IMR-90 (cell line): ENCODE measurements at regions of chr3 and their contacts with region 1.

Region 1: GRCh38 chr3:18559331-18559842 is 134.2 kb upstream of the SATB1 start:
- DNase-seq: no peak
- ATAC-seq: no peak
- H3K4me3 ChIP-seq: no peak overlapping the region
- H3K27ac ChIP-seq: no peak overlapping the region
- H3K4me1 ChIP-seq: no peaks in the 10 kb centered on the region
- H3K27me3 ChIP-seq: no peaks in the 10 kb centered on the region
- CTCF ChIP-seq: no peak
- POLR2A ChIP-seq: no peak
- RAD21 ChIP-seq: no peak

Region 2: DNA sequence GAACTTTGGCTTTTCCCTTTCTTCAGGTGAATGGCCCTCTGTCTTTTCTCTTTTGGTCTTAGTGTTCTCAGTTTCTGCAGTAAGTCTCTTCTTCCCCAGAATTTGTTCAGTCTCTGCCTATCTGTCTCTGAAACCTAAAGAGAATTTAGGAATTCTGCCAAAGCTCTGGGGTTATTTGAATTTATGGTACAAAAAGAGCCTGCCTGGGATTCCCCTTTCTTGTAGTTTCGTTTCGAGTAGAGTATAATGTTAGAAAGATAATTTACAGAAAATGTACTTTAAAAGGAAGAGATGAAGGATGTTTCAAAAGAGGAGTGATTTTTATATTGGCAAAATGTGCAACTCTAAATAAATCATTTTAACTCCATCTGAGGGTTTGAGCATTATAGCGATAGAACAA is 113.2 kb after region 1 on chr3:
- CTCF ChIA-PET with region 1: no interaction called
- POLR2A ChIA-PET with region 1: no interaction called
- dilution Hi-C with region 1: no loop called
- in situ Hi-C with region 1: no loop called
- intact Hi-C with region 1: no loop called
- DNase-seq: no peak
- ATAC-seq: no peak
- H3K4me3 ChIP-seq: no peak overlapping the region
- H3K27ac ChIP-seq: no peak overlapping the region
- H3K4me1 ChIP-seq: no peaks in the 10 kb centered on the region
- H3K27me3 ChIP-seq: no peaks in the 10 kb centered on the region
- CTCF ChIP-seq: no peak
- POLR2A ChIP-seq: no peak
- RAD21 ChIP-seq: no peak

Region 3: DNA sequence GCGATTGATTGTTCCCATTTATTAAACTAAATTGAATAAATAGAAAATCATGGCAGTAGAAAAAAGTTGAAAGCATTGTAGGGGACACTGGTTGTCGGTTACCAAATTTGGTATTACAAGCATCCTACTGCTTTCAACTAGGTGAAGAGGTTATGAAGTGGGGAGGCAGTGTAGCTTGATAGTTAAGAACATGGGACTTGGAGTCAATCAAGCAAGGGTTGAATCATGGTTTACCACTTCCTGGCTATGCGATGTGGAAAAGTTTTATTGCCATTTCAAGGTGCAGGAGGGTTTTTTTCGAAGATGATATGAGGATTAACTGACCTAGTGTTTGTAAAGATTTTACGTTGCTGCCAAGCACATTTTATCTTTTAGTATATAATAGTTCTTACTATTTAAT is 270.7 kb after region 1 on chr3:
- CTCF ChIA-PET with region 1: no interaction called
- POLR2A ChIA-PET with region 1: no interaction called
- dilution Hi-C with region 1: no loop called
- in situ Hi-C with region 1: no loop called
- intact Hi-C with region 1: no loop called
- DNase-seq: no peak
- ATAC-seq: no peak
- H3K4me3 ChIP-seq: no peak overlapping the region
- H3K27ac ChIP-seq: no peak overlapping the region
- H3K4me1 ChIP-seq: no peaks in the 10 kb centered on the region
- H3K27me3 ChIP-seq: no peaks in the 10 kb centered on the region
- CTCF ChIP-seq: no peak
- POLR2A ChIP-seq: no peak
- RAD21 ChIP-seq: no peak

Region 4: GRCh38 chr3:19866751-19867347 is 1307.5 kb after region 1 on chr3:
- CTCF ChIA-PET with region 1: no interaction called
- POLR2A ChIA-PET with region 1: no interaction called
- dilution Hi-C with region 1: no loop called
- in situ Hi-C with region 1: no loop called
- intact Hi-C with region 1: loop called (anchors 2 kb)
- DNase-seq: peak; percentile 58
- ATAC-seq: peak; percentile 92
- H3K4me3 ChIP-seq: no peak overlapping the region
- H3K27ac ChIP-seq: no peak overlapping the region
- H3K4me1 ChIP-seq: no peaks in the 10 kb centered on the region
- H3K27me3 ChIP-seq: no peaks in the 10 kb centered on the region
- CTCF ChIP-seq: peak; percentile 72
- POLR2A ChIP-seq: no peak
- RAD21 ChIP-seq: peak; percentile 69